A673 (cell line): ENCODE measurements at regions of chr2 and their contacts with region 1.

Region 1: DNA sequence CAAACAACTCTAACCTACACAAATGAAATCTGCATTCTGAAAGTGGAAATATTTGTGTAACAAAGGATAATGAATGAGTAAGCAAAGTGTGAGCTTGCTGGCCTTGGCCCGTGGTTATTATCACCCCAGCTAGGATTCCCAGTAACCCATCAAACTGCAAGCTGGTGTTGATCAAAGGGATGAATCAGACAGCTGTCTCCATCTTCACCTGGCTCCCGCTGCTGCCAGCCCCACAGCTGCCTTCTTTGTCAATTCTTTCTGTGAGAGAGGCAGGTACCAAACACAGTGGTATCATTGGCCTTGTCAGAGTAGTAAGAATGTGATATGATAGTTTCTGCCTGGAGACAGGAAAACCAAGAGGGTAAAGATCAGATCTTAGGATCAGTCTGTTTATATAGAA is 25.2 kb upstream of the RGPD4 start:
- DNase-seq: no peak
- H3K4me3 ChIP-seq: no peak overlapping the region
- H3K27ac ChIP-seq: no peak overlapping the region
- H3K4me1 ChIP-seq: no peaks in the 10 kb centered on the region
- H3K27me3 ChIP-seq: no peaks in the 10 kb centered on the region
- CTCF ChIP-seq: no peak

Region 2: GRCh38 chr2:107684421-107684820 is 117.1 kb before region 1 on chr2:
- CTCF ChIA-PET with region 1: no interaction called
- POLR2A ChIA-PET with region 1: interaction called, 17 read pairs
- intact Hi-C with region 1: no loop called
- DNase-seq: no peak
- H3K4me3 ChIP-seq: no peak overlapping the region
- H3K27ac ChIP-seq: no peak overlapping the region
- H3K4me1 ChIP-seq: no peaks in the 10 kb centered on the region
- H3K27me3 ChIP-seq: no peaks in the 10 kb centered on the region
- CTCF ChIP-seq: no peak

Region 3: GRCh38 chr2:107932979-107933378 is 131.5 kb after region 1 on chr2:
- CTCF ChIA-PET with region 1: no interaction called
- POLR2A ChIA-PET with region 1: no interaction called
- intact Hi-C with region 1: no loop called
- DNase-seq: no peak
- H3K4me3 ChIP-seq: no peak overlapping the region
- H3K27ac ChIP-seq: no peak overlapping the region
- H3K4me1 ChIP-seq: no peaks in the 10 kb centered on the region
- H3K27me3 ChIP-seq: no peaks in the 10 kb centered on the region
- CTCF ChIP-seq: peak; percentile 39

Region 4: DNA sequence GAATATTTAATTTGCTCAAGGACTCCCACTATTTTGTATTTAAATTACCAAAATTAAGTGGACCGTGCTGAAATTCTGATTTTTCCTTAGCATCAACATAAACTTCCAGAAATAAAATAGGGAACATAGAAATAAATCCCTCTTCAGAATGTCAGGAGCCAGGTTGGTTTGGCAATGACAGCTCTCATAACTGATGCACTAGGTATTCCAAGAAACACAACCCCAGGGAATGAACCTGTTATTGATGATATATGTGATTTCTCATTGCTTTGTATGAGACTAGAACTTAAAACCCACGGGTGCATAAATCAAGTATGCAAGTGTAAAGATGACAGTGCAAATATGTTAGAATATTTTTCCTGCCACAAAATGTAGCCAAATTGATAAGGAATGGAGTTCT is 197.7 kb after region 1 on chr2:
- CTCF ChIA-PET with region 1: no interaction called
- POLR2A ChIA-PET with region 1: no interaction called
- intact Hi-C with region 1: no loop called
- DNase-seq: no peak
- H3K4me3 ChIP-seq: no peak overlapping the region
- H3K27ac ChIP-seq: no peak overlapping the region
- H3K4me1 ChIP-seq: no peaks in the 10 kb centered on the region
- H3K27me3 ChIP-seq: no peaks in the 10 kb centered on the region
- CTCF ChIP-seq: no peak